Left ventricle myocardium inferior (tissue), 1 donor: ENCODE measurements at regions of chr3 and their contacts with region 1.

Region 1: GRCh38 chr3:62188681-62189383 is 184.5 kb downstream of the FEZF2 start:
- DNase-seq: peak; percentile 77
- H3K4me3 ChIP-seq: no peak overlapping the region
- H3K27ac ChIP-seq: no peak overlapping the region
- H3K4me1 ChIP-seq: peaks cover 37% of the 10 kb centered on the region
- H3K27me3 ChIP-seq: no peaks in the 10 kb centered on the region
- CTCF ChIP-seq: peak; percentile 91

Region 2: DNA sequence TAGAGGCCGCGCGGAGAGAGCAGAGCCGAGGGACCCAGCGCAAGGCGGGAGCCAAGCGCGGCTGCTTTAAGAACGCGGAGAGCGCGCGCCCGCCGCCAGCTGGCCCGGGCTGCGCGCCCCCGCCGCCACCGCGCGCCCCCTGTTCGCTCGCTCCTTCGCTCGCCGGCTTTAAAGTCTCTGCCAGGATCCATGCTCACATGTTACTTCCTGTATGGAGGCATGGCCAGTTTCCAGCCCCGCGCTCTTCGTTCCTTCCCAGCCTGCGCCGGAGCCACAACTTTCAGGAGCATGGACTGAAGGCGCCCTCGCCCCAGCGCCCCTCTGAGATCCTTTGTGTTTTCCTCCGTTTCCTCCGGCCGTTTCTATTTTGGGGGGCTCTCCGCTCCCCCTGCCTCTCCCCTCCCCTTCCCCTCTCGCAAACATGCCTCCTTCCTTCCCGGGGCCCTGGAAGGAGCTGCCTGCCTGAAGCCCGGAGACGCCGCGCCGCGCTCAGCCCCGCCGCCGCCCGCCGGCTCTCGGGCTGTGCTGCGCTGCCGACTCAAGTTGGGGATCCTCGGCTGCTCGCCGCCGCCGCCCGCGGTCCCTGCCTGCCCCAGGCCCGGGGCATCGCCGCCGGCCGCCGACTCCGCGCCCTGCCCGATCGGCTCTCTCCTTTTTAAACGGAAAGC is 627.3 kb before region 1 on chr3 and contains the start of gene PTPRG:
- intact Hi-C with region 1: loop called (anchors 5 kb)
- DNase-seq: peak; percentile 91
- H3K4me3 ChIP-seq: peak within 1 kb of the TSS; percentile 85
- H3K27ac ChIP-seq: peak within 1 kb of the TSS; percentile 99
- H3K4me1 ChIP-seq: peaks cover 70% of the 10 kb centered on the region
- H3K27me3 ChIP-seq: no peaks in the 10 kb centered on the region
- CTCF ChIP-seq: no peak
- total RNA-seq, gene PTPRG: 29.6 TPM

Region 3: GRCh38 chr3:61858056-61858455 is 330.8 kb before region 1 on chr3:
- intact Hi-C with region 1: loop called (anchors 5 kb)
- DNase-seq: no peak
- H3K4me3 ChIP-seq: no peak overlapping the region
- H3K27ac ChIP-seq: no peak overlapping the region
- H3K4me1 ChIP-seq: peaks cover 77% of the 10 kb centered on the region
- H3K27me3 ChIP-seq: no peaks in the 10 kb centered on the region
- CTCF ChIP-seq: peak; percentile 76

Region 4: GRCh38 chr3:61927332-61927731 is 261.5 kb before region 1 on chr3:
- intact Hi-C with region 1: loop called (anchors 5 kb)
- DNase-seq: peak; percentile 83
- H3K4me3 ChIP-seq: peak overlapping the region; percentile 35
- H3K27ac ChIP-seq: peak overlapping the region; percentile 88
- H3K4me1 ChIP-seq: peaks cover 76% of the 10 kb centered on the region
- H3K27me3 ChIP-seq: no peaks in the 10 kb centered on the region
- CTCF ChIP-seq: no peak

Region 5: GRCh38 chr3:62299857-62300406 is 111.1 kb after region 1 on chr3:
- intact Hi-C with region 1: no loop called
- DNase-seq: no peak
- H3K4me3 ChIP-seq: no peak overlapping the region
- H3K27ac ChIP-seq: no peak overlapping the region
- H3K4me1 ChIP-seq: peaks cover 6% of the 10 kb centered on the region
- H3K27me3 ChIP-seq: no peaks in the 10 kb centered on the region
- CTCF ChIP-seq: no peak

Region 6: GRCh38 chr3:62415312-62415801 is 226.5 kb after region 1 on chr3:
- intact Hi-C with region 1: no loop called
- DNase-seq: no peak
- H3K4me3 ChIP-seq: no peak overlapping the region
- H3K27ac ChIP-seq: no peak overlapping the region
- H3K4me1 ChIP-seq: no peaks in the 10 kb centered on the region
- H3K27me3 ChIP-seq: peaks cover 7% of the 10 kb centered on the region
- CTCF ChIP-seq: no peak